ENCODE measurements at regions of chr2 and their contacts with region 1.

Region 1: GRCh38 chr2:26099933-26100332 is 66.0 kb downstream of the RAB10 start:
- DNase-seq: no peak
- H3K4me3 Mint-ChIP-seq: no peak overlapping the region
- H3K27ac Mint-ChIP-seq: no peak overlapping the region
- H3K4me1 Mint-ChIP-seq: peaks cover 5% of the 10 kb centered on the region
- H3K27me3 Mint-ChIP-seq: no peaks in the 10 kb centered on the region

Region 2: DNA sequence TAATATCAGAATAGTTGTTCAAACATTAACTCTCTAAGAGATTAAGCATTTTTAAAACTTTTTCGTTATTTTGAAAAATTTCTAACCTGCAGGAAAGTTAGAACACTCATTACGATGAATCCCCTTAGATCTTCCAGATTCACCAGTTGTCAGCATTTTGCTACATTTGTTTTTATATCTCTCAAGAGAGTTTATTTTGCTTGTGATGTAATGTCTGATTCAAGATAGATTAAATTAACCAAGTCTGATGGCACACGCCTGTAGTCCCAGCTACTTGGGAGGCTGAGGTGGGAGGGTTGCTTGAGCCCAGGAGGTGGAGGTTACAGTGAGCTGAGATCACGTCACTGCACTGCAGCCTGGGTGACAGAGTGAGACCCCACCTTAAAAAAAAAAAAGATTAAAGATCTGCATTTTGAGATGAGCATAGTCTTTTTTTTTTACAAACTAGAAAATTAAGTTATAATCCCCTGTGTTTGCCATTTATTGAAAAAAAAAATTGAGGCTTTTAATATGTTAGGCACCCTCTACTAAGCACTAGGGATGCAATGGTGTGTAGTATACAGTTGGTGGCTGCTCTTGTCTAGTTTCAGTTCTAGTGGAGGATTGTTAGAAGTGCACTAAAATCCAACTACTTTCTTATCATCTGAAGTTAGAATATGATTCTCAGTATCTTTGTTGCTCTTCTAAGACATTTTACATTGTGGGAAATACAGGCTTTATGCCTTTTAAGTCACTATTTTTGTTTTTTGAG is 45.2 kb before region 1 on chr2:
- intact Hi-C with region 1: loop called (anchors 5 kb)
- DNase-seq: no peak
- H3K4me3 Mint-ChIP-seq: no peak overlapping the region
- H3K27ac Mint-ChIP-seq: no peak overlapping the region
- H3K4me1 Mint-ChIP-seq: peaks cover 55% of the 10 kb centered on the region
- H3K27me3 Mint-ChIP-seq: no peaks in the 10 kb centered on the region

Region 3: DNA sequence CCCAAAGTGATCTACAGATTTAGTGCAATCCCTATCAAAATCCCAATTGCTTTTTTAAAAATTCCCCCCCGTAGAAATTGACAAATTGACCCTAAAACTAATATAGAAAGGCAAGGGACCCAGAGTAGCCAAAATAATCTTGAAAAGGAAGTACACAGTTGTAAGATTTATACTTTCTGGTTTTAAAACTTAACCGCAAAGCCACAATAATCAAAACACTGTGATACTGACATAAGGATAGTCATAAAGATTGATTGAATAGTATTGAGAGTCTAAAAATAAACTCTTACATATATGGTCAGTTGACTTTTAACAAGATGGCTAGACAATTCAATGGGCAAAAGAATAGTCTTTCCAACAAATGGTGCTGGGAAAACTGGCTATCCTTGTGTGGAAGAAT is 14.2 kb after region 1 on chr2:
- intact Hi-C with region 1: loop called (anchors 2 kb)
- DNase-seq: no peak
- H3K4me3 Mint-ChIP-seq: no peak overlapping the region
- H3K27ac Mint-ChIP-seq: no peak overlapping the region
- H3K4me1 Mint-ChIP-seq: peaks cover 11% of the 10 kb centered on the region
- H3K27me3 Mint-ChIP-seq: no peaks in the 10 kb centered on the region